Mammary epithelial cell (primary cell): ENCODE measurements at regions of chr22 and their contacts with region 1.

Region 1: DNA sequence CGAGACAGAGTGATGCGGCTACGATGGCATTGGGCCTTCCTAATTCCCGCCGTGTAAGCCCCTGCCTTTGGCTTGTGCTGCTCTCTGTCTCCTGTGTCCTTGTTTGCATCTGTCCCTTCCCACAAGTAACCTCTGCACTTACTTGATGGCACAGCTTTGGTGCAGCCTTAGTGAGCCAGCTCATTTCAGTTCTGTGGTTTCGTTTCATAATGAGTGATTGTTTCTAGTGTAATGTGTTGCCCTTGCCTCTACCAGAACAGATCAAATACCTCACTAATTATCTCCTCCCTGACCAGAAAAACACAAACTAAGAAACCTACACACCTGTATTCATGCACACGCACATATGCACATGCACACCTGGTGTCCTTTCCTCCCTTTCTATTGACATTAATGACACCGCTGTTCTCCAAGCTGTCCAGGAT is 58.8 kb downstream of the GRK3 start:
- DNase-seq: peak; percentile 39
- H3K4me3 ChIP-seq: no peak overlapping the region
- H3K27ac ChIP-seq: no peak overlapping the region
- H3K4me1 ChIP-seq: no peaks in the 10 kb centered on the region
- H3K27me3 ChIP-seq: no peaks in the 10 kb centered on the region
- CTCF ChIP-seq: no peak

Region 2: DNA sequence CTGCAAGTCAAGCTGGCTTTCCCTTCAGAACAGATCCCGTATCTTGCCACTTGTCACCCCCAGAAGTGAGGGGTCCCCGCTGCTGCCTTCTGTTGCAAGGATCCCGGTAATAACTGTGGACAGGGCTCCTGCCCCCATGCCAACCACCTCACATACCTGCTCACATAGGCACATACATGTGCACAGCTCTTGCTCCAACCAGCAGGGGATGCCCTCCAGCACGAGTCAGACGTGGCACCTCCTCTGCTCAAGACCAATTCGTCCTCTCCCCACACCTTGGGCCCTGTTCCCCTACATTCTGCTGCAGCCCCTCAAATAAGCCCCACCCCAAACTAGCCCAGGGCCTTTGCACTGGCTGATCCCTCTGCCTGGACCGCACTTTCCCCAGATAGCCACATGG is 240.6 kb before region 1 on chr22:
- CTCF ChIA-PET with region 1: no interaction called
- dilution Hi-C with region 1: no loop called
- in situ Hi-C with region 1: no loop called
- intact Hi-C with region 1: no loop called
- DNase-seq: no peak
- H3K4me3 ChIP-seq: no peak overlapping the region
- H3K27ac ChIP-seq: no peak overlapping the region
- H3K4me1 ChIP-seq: no peaks in the 10 kb centered on the region
- H3K27me3 ChIP-seq: no peaks in the 10 kb centered on the region
- CTCF ChIP-seq: peak in 1 of 2 donors; percentile 8

Region 3: GRCh38 chr22:25582946-25583345 is 40.4 kb before region 1 on chr22:
- CTCF ChIA-PET with region 1: no interaction called
- dilution Hi-C with region 1: no loop called
- in situ Hi-C with region 1: no loop called
- intact Hi-C with region 1: no loop called
- DNase-seq: peak; percentile 46
- H3K4me3 ChIP-seq: no peak overlapping the region
- H3K27ac ChIP-seq: no peak overlapping the region
- H3K4me1 ChIP-seq: peaks cover 19% of the 10 kb centered on the region
- H3K27me3 ChIP-seq: no peaks in the 10 kb centered on the region
- CTCF ChIP-seq: no peak

Region 4: GRCh38 chr22:25656724-25657123 is 33.4 kb after region 1 on chr22:
- CTCF ChIA-PET with region 1: no interaction called
- dilution Hi-C with region 1: loop called (anchors 5 kb)
- in situ Hi-C with region 1: no loop called
- intact Hi-C with region 1: no loop called
- DNase-seq: no peak
- H3K4me3 ChIP-seq: no peak overlapping the region
- H3K27ac ChIP-seq: no peak overlapping the region
- H3K4me1 ChIP-seq: no peaks in the 10 kb centered on the region
- H3K27me3 ChIP-seq: no peaks in the 10 kb centered on the region
- CTCF ChIP-seq: no peak